ENCODE measurements at regions of chr17 and their contacts with region 1.

Region 1: GRCh38 chr17:81245024-81245664 is 6.0 kb downstream of the NDUFAF8 start:
- DNase-seq: peak in 3 of 6 donors; percentile 9 to 57 (median 52)
- ATAC-seq: no peak
- H3K4me3 ChIP-seq: no peak overlapping the region
- H3K27ac ChIP-seq: no peak overlapping the region
- H3K4me1 ChIP-seq: peaks cover 0 to 2% (median 0%) of the 10 kb centered on the region in 3 donors
- H3K27me3 ChIP-seq: no peaks in the 10 kb centered on the region
- CTCF ChIP-seq: no peak

Region 2: GRCh38 chr17:81322271-81323082 is 77.3 kb after region 1 on chr17:
- intact Hi-C with region 1: no loop called
- DNase-seq: peak in 3 of 6 donors; percentile 52 to 73 (median 71)
- ATAC-seq: peak; percentile 21 to 67 (median 52)
- H3K4me3 ChIP-seq: no peak overlapping the region
- H3K27ac ChIP-seq: no peak overlapping the region
- H3K4me1 ChIP-seq: no peaks in the 10 kb centered on the region
- H3K27me3 ChIP-seq: no peaks in the 10 kb centered on the region
- CTCF ChIP-seq: peak in 1 of 4 donors; percentile 6

Region 3: GRCh38 chr17:81543339-81543675 is 298.2 kb after region 1 on chr17:
- intact Hi-C with region 1: loop called in 1 of 3 experiments (anchors 5 kb)
- DNase-seq: peak in 1 of 6 donors; percentile 59
- ATAC-seq: peak in 1 of 4 donors; percentile 1
- H3K4me3 ChIP-seq: no peak overlapping the region
- H3K27ac ChIP-seq: no peak overlapping the region
- H3K4me1 ChIP-seq: peaks cover 0 to 3% (median 0%) of the 10 kb centered on the region in 3 donors
- H3K27me3 ChIP-seq: no peaks in the 10 kb centered on the region
- CTCF ChIP-seq: no peak

Measured in pancreas (tissue), 10 donors.